ENCODE measurements at regions of chr20 and their contacts with region 1.

Region 1: DNA sequence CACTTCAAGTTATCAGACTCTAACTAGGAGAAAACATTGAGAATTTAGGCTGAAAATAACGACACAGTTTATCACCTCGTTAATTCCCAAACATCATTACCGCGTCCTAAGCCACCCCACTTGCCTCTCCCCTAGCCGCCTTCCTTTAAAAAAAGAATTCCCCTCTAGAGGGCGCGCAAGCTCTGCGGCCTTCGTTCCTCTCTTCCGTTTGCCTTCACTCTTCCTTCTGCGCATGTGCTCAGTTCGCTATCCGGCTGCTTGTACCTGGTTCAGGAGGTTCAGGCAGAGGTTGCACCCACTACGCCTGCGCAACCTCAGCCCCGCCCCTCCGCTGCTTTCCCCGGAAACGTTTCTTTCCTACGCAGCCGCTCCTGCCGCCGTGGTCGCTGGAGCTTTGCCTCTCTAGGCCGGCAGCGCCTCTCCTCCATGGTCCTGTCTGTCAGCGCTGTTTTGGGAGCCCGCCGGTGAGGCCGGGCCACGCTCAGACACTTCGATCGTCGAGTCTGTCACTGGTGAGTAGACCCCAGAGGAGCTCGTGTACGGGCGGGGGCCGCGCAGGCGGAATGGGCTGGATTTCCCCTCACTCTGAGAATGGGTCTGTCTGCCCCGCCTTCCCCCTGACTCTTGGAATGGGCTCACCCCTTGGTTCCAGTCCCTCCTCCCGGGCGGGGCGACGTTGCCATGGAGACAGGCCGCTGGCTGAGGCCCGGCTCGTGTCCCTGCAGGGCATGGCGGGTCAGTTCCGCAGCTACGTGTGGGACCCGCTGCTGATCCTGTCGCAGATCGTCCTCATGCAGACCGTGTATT is at the start of gene SYS1:
- DNase-seq: peak; percentile 99
- ATAC-seq: peak; percentile 92
- total RNA-seq, gene SYS1: 21.9 TPM

Region 2: DNA sequence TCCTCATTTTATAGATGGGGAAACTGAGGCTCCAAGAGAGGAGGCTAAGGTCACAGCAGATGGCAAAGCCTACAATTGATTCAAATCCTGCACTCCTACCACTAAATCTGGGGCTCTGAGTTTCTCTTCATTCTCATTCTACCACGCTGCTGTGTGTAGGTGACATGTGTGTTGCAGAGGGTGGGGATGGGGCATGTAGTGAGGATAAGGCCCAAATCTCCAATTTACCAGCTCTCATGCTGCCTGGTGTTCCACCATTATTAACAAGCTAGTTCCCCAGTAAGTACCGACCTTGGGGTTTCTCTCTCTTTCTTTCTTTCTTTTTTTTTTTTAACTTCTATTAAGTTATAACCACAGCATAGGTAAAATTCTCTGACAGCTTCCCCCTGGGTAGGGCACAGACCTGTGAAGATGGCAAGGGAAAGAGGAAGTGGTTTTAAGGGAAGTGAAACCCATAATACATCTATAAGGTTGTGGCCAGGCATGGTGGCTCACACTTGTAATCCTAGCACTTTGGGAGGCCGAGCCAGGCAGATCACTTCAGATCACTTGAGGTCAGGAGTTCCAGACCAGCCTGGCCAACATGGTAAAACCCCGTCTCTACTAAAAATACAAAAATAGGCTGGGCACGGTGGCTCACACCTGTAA is 41.9 kb before region 1 on chr20:
- intact Hi-C with region 1: loop called (anchors 2 kb)
- DNase-seq: no peak
- ATAC-seq: no peak

Region 3: DNA sequence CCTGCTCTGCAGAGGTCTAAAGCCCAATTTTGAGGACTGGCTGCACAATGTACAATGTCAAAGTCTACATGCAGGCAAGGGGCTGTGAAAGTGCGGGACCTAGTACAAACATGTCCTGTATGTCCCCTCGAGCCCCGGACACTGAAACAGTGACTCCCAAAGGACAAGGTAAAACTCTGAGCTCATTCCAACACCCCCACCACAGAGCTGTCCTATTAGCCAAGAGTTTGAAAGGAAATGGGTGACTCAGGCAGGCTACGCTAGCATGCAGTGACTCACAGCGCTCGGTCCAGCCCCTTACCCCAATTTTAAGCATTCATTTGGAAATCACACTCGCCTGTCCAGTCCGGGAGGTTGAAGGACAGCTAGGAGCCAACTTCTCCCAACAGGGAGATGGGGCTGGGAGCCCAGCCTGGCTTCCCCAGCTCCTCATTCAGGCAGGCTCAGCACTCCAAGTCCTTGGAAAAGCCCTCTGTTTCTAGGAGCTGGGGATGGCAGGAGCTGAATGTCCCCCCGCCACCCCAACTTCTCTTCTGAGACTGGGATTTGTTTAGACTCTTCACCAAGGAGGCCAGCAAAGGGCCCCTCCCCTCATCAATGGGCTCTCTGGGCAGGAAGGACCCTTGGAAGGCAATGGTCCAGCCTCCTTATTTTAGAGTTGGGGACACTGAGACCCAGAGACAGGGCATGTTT is 18.7 kb before region 1 on chr20:
- intact Hi-C with region 1: loop called (anchors 1 kb)
- DNase-seq: no peak
- ATAC-seq: no peak

Region 4: GRCh38 chr20:45373353-45374100 is 10.5 kb after region 1 on chr20:
- intact Hi-C with region 1: loop called (anchors 1 kb)
- DNase-seq: peak; percentile 92
- ATAC-seq: peak; percentile 88

Region 5: GRCh38 chr20:45406259-45407066 is 43.5 kb after region 1 on chr20:
- intact Hi-C with region 1: loop called (anchors 2 kb)
- DNase-seq: peak; percentile 85
- ATAC-seq: peak; percentile 64

Region 6: DNA sequence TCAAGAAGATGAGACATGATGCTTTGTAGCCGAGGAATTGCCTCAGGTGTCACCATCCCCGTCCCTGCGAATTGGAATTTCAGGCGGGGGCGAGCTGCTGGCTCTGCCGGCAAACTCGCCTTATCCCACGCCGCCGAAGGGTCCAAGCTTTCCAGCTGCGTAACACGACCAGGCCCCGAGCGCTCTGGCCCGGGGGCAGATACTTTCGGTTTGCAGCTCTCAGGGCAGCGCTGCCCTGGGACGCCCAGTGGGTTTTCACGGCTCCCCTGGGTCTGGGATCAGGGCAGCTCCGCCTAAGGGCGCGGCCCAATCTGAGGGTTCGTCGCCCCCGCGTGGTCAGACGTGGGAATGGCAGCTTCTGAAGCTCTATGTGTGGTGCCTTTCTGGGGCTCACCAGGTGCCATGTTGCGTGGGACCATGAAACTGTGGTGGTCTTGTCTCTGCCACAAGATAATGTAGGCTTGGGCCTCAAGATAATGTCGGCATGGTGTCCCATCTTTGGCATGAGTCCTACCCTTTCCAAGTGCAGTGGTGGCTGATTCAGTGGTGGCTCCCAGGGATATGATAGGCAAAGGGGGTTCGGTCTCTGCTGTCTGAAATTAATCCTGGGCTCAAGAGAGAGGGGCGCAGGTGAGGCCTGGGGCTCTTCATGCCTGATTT is 73.9 kb after region 1 on chr20:
- intact Hi-C with region 1: loop called (anchors 2 kb)
- DNase-seq: peak; percentile 94
- ATAC-seq: peak; percentile 95

Region 7: GRCh38 chr20:46324960-46325703 is 962.1 kb after region 1 on chr20:
- intact Hi-C with region 1: no loop called
- DNase-seq: no peak
- ATAC-seq: no peak